Heart right ventricle (tissue), 16 donors: ENCODE measurements at regions of chr20 and their contacts with region 1.

Region 1: GRCh38 chr20:9407805-9408421 is 106.5 kb upstream of the LAMP5 start:
- DNase-seq: peak in 1 of 2 donors; percentile 62
- ATAC-seq: peak in 6 of 8 donors; percentile 63 to 83 (median 76)
- H3K4me3 ChIP-seq: no peak overlapping the region
- H3K27ac ChIP-seq: no peak overlapping the region
- H3K4me1 ChIP-seq: peaks cover 0 to 7% (median 0%) of the 10 kb centered on the region in 9 donors
- H3K27me3 ChIP-seq: no peaks in the 10 kb centered on the region
- CTCF ChIP-seq: peak; percentile 68 to 91 (median 84)

Region 2: DNA sequence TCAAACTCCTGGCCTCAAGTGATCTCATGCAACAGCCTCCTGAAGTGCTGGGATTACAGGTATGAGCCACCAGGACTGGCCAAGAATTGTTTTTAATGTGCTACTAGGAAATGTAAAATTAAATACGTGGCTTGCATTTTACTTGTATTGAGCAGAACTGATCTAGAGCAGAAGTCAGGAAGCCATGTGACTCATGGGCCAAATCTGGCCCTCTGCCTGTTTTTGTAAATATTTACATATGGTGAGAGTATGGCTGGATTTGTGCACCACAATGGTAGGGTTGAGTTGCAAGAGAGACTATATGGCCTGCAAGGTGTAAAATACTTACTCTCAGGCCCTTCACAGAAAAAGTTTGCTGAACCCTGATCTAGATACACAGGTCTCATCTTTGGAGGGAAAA is 182.3 kb after region 1 on chr20:
- intact Hi-C with region 1: no loop called
- DNase-seq: no peak
- ATAC-seq: no peak
- H3K4me3 ChIP-seq: no peak overlapping the region
- H3K27ac ChIP-seq: no peak overlapping the region
- H3K4me1 ChIP-seq: no peaks in the 10 kb centered on the region
- H3K27me3 ChIP-seq: peaks cover 0 to 11% (median 7%) of the 10 kb centered on the region in 7 donors
- CTCF ChIP-seq: no peak

Region 3: GRCh38 chr20:9912858-9913434 is 505.0 kb after region 1 on chr20:
- intact Hi-C with region 1: loop called in 2 of 10 experiments (anchors 10 kb)
- DNase-seq: peak; percentile 6 to 14
- ATAC-seq: no peak
- H3K4me3 ChIP-seq: no peak overlapping the region
- H3K27ac ChIP-seq: no peak overlapping the region
- H3K4me1 ChIP-seq: no peaks in the 10 kb centered on the region
- H3K27me3 ChIP-seq: peaks cover 0 to 20% (median 11%) of the 10 kb centered on the region in 7 donors
- CTCF ChIP-seq: peak; percentile 62 to 87 (median 78)